ENCODE measurements at regions of chr11 and their contacts with region 1.

Region 1: GRCh38 chr11:36478700-36479329 is 31.3 kb downstream of the TRAF6 start:
- DNase-seq: peak; percentile 28
- H3K27ac ChIP-seq: no peak overlapping the region
- CTCF ChIP-seq: peak; percentile 44

Region 2: DNA sequence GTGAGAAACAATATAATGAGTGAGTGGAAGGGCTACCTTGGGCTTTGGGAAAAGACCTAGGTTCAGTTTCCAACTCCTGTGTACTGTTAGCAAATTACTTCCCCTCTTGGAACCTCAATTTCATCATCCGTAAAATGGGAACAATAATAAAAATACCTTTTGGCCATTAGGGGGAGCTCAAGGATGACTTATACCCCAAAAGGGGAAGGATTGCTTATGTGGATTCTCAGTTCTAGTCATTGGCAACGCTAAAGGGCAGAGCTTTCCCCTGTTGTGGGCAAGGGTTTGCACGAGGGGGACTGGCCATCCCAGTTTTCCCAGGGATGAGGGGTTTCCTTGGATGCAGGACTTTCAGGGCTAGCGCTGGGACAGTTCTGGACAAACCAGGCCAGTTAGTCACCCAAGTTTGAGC is 186.5 kb before region 1 on chr11:
- CTCF ChIA-PET with region 1: interaction called, 30 read pairs
- POLR2A ChIA-PET with region 1: no interaction called
- DNase-seq: peak; percentile 41
- H3K27ac ChIP-seq: no peak overlapping the region
- CTCF ChIP-seq: no peak

Region 3: GRCh38 chr11:36376888-36377758 is 101.7 kb before region 1 on chr11:
- CTCF ChIA-PET with region 1: interaction called, 14 read pairs
- POLR2A ChIA-PET with region 1: no interaction called
- DNase-seq: peak; percentile 33
- H3K27ac ChIP-seq: peak overlapping the region; percentile 72
- CTCF ChIP-seq: peak; percentile 77

Measured in RWPE1 (cell line).